Naive thymus-derived CD4-positive, alpha-beta T cell (primary cell): ENCODE measurements at regions of chr20 and their contacts with region 1.

Region 1: DNA sequence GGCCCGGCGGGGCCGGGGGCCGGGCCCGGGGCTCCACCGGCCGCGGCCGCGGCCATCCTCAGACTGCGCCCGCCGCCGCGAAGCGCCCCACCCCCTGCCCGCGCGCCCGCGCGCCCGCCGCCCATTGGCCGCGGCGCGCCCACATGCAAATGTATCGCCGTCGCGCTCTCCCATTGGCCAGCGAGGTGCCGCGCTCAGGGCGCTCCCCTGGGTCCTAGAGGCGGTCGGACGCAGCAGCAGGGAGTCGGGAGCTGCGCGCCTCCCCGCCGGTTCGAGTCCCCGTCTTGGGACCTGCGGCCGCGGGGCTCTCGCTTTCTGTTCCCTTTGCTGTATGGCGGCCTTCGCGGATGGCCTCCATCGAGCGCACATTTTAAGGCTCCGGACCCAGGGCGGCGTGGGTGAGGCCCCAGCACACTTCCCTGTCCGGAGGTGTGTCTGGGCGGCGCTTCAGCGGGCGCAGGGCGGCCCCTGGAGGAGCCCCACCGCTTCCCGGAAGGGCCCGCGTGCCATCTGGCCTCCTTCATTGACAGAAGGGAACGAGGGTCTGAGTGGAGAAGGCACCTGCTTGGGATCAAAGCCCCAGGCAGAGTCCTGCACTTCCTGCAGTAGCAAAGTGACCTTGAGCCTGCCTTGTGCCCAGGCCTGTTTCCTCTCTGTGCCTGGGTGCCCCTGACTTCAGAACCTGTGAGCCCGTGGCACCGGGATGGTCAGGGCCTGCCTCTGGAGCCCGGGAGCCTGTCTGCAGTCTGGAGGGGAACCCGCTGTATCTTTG is at the start of gene CABLES2:
- DNase-seq: peak; percentile 86 to 94 (median 91)
- ATAC-seq: peak; percentile 98
- H3K4me3 ChIP-seq: peak within 1 kb of the TSS; percentile 74
- H3K4me3 Mint-ChIP-seq: peak within 1 kb of the TSS; percentile 68 to 90 (median 82)
- H3K27ac ChIP-seq: peak within 1 kb of the TSS; percentile 76
- H3K27ac Mint-ChIP-seq: peak within 1 kb of the TSS in 8 of 9 donors; percentile 52 to 88 (median 68)
- H3K4me1 ChIP-seq: peaks cover 17 to 23% of the 10 kb centered on the region in 2 donors
- H3K4me1 Mint-ChIP-seq: peaks cover 19 to 31% (median 26%) of the 10 kb centered on the region in 7 donors
- H3K27me3 ChIP-seq: no peaks in the 10 kb centered on the region
- H3K27me3 Mint-ChIP-seq: peaks cover 0 to 3% (median 0%) of the 10 kb centered on the region in 5 donors
- total RNA-seq, gene CABLES2: 4.3 to 16.7 (median 6.3) TPM

Region 2: DNA sequence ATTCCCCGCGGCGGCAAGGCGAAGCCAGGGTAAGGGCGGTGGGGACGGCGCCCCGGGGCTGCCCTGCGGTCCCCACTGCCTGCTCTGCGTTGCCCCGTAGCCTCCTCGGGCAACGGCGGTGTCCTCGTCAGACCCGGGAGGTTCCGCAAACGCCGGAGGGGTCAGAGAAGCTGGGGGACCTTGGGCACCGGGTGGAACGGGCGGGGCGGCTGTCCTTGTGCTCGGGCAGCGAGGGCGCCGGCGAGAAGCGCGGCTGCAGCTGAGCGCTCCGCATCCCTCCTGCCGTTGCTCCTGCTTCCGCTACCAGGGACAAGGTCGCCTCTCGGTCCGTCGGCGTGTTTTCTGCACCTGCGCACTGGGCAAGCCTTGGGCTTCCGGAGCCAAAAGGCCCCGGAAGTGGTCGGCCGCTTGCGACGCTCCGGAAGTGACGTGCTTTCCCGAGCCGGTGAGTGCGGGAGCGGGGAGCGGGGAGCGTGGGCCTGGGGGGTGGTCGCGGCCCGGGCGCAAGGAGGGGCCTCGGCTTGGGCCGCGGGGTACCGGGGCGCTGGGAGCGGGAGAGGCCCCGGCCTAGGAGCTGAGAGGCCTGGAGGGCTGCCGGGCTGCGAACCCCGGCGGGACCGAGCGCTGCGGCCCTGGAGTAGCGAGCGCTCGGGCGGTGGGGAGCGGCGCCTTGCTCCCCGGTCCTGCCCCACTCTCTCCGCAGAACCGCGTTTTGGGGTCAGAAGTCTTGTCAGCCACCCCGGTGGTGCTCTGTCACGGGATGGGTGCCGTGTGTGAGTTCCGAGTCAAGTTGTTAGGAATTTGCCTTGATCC is 224.6 kb before region 1 on chr20 and contains the start of gene MTG2:
- CTCF ChIA-PET with region 1: no interaction called
- POLR2A ChIA-PET with region 1: no interaction called
- intact Hi-C with region 1: loop called in 1 of 2 experiments (anchors 1 kb)
- DNase-seq: peak; percentile 81 to 94 (median 93)
- ATAC-seq: peak; percentile 95
- H3K4me3 ChIP-seq: peak within 1 kb of the TSS; percentile 87
- H3K4me3 Mint-ChIP-seq: peak within 1 kb of the TSS; percentile 84 to 95 (median 90)
- H3K27ac ChIP-seq: peak within 1 kb of the TSS; percentile 92
- H3K27ac Mint-ChIP-seq: peak within 1 kb of the TSS; percentile 90 to 97 (median 95)
- H3K4me1 ChIP-seq: peaks cover 9 to 16% of the 10 kb centered on the region in 2 donors
- H3K4me1 Mint-ChIP-seq: peaks cover 15 to 55% (median 42%) of the 10 kb centered on the region in 7 donors
- H3K27me3 ChIP-seq: no peaks in the 10 kb centered on the region
- H3K27me3 Mint-ChIP-seq: no peaks in the 10 kb centered on the region
- total RNA-seq, gene MTG2: 20.4 to 51.5 (median 41.8) TPM

Region 3: DNA sequence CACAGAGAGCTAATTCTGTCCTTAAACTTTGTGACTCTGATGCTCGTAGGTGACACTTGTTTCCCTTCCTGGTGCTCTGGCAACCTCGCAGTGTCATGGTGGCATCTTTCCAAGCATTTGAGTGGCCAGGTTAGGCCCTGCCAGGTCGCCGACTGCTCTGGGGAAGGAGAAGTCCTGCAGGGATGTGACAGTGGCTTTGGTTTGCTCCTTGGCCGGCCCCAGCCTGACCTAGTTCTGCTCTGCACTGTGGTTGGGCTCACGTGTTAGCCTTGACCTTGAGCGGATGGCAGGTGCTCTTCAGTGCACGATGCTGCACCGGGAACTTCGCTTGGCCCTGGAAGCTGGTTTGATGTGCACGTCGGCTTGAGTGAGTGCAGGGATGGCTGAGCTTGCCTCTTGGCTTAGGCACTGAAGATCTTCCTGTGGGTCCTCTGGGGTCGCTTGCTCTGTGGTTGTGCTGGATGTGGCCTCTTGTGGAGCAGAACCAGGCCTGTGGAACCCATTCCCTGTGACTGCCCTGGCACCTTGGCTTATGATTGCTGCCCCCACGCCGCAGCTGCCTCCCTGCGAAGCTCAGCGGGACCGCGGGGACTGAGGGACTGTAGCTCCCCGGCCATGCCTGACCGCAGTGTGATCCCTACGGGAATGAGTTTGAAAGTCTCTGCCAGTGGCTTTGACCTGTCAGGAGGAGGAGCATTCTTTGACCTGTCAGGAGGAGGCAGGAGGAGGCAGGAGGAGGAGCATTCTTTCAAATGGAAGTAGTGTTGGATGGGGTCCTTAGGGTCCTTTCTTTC is 160.3 kb before region 1 on chr20:
- CTCF ChIA-PET with region 1: no interaction called
- POLR2A ChIA-PET with region 1: no interaction called
- intact Hi-C with region 1: no loop called
- DNase-seq: no peak
- ATAC-seq: no peak
- H3K4me3 ChIP-seq: no peak overlapping the region
- H3K4me3 Mint-ChIP-seq: peak overlapping the region in 1 of 10 donors; percentile 48
- H3K27ac ChIP-seq: no peak overlapping the region
- H3K27ac Mint-ChIP-seq: no peak overlapping the region
- H3K4me1 ChIP-seq: no peaks in the 10 kb centered on the region
- H3K4me1 Mint-ChIP-seq: peaks cover under 1 to 54% (median 38%) of the 10 kb centered on the region in 7 donors
- H3K27me3 ChIP-seq: no peaks in the 10 kb centered on the region
- H3K27me3 Mint-ChIP-seq: no peaks in the 10 kb centered on the region

Region 4: GRCh38 chr20:62339647-62340070 is 67.7 kb before region 1 on chr20:
- CTCF ChIA-PET with region 1: no interaction called
- POLR2A ChIA-PET with region 1: no interaction called
- intact Hi-C with region 1: no loop called
- DNase-seq: no peak
- ATAC-seq: peak; percentile 34
- H3K4me3 ChIP-seq: no peak overlapping the region
- H3K4me3 Mint-ChIP-seq: no peak overlapping the region
- H3K27ac ChIP-seq: no peak overlapping the region
- H3K27ac Mint-ChIP-seq: no peak overlapping the region
- H3K4me1 ChIP-seq: no peaks in the 10 kb centered on the region
- H3K4me1 Mint-ChIP-seq: peaks cover 0 to 7% (median 0%) of the 10 kb centered on the region in 7 donors
- H3K27me3 ChIP-seq: no peaks in the 10 kb centered on the region
- H3K27me3 Mint-ChIP-seq: peaks cover 0 to 16% (median 7%) of the 10 kb centered on the region in 5 donors

Region 5: GRCh38 chr20:62616728-62617621 is 209.6 kb after region 1 on chr20:
- CTCF ChIA-PET with region 1: no interaction called
- POLR2A ChIA-PET with region 1: no interaction called
- intact Hi-C with region 1: loop called in 1 of 2 experiments (anchors 2 kb)
- DNase-seq: peak; percentile 42 to 82 (median 57)
- ATAC-seq: peak; percentile 86
- H3K4me3 ChIP-seq: no peak overlapping the region
- H3K4me3 Mint-ChIP-seq: peak overlapping the region in 4 of 10 donors; percentile 42 to 82 (median 64)
- H3K27ac ChIP-seq: no peak overlapping the region
- H3K27ac Mint-ChIP-seq: peak overlapping the region in 5 of 9 donors; percentile 28 to 90 (median 72)
- H3K4me1 ChIP-seq: peaks cover 16 to 27% of the 10 kb centered on the region in 2 donors
- H3K4me1 Mint-ChIP-seq: peaks cover 7 to 35% (median 19%) of the 10 kb centered on the region in 7 donors
- H3K27me3 ChIP-seq: no peaks in the 10 kb centered on the region
- H3K27me3 Mint-ChIP-seq: peaks cover 0 to 9% (median 0%) of the 10 kb centered on the region in 5 donors